ENCODE measurements at regions of chr1 and their contacts with region 1.

Region 1: GRCh38 chr1:153816283-153816889 is 41.2 kb downstream of the SLC27A3 start:
- DNase-seq: peak in 1 of 2 donors; percentile 26
- ATAC-seq: peak; percentile 57 to 80
- H3K4me3 ChIP-seq: no peak overlapping the region
- H3K27ac ChIP-seq: peak overlapping the region; percentile 19 to 74 (median 38)
- H3K4me1 ChIP-seq: peaks cover 0 to 25% of the 10 kb centered on the region in 2 donors
- H3K27me3 ChIP-seq: no peaks in the 10 kb centered on the region
- CTCF ChIP-seq: no peak
- POLR2A ChIP-seq: no peak

Region 2: DNA sequence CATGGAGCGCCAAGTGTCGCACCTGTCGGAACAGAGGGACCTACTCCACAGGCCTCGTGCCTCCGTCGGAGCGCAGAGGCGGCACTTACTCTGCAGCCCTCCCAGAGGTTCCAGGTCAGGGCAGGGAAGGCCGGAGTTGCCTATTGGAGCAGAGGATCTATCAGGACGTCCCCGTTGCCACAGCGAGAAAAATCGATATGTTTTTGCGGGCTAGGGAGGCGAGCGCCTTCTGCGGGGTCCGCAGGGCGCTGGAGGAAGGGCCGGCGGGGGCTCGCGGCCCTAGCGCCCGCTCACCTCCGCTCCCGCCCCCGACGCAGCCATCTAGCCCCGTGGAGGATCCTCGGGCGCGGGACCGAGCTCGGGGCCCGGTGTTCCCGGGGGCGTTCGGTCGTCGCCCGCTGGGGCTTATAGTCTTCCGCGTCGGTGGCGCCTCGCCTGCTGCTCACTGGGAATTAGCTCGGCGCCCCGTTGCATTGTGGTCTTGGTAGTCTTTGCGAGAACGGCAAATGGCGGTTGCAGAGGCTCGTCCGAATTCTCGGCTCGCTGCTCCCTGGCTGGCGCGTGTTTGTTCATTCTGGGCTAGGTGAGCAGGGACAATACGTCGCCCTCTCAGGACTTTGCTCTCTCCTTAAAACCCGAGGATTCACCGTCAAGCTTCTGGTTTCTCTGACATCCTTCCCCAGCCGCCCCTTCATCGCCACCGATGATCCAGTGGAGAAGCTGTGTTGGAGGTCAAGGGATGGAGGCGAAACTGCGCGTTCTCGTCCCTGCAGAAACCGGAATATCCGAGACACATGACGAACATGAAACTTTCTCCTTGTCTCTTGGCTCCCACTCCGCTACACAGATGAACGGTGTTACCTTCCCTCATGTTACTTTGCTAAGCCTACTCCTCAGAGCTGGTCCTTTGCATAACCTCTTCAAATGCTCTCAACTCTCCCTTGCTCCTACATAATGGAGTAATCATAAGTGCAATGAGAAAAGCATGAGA is 161.2 kb after region 1 on chr1 and contains the start of gene JTB:
- in situ Hi-C with region 1: loop called in 1 of 4 experiments (anchors 10 kb)
- intact Hi-C with region 1: no loop called
- DNase-seq: peak; percentile 86 to 87
- ATAC-seq: peak; percentile 95 to 97
- H3K4me3 ChIP-seq: peak within 1 kb of the TSS; percentile 71 to 100 (median 81)
- H3K27ac ChIP-seq: peak within 1 kb of the TSS; percentile 92 to 100 (median 92)
- H3K4me1 ChIP-seq: peaks cover 20 to 24% of the 10 kb centered on the region in 2 donors
- H3K27me3 ChIP-seq: no peaks in the 10 kb centered on the region
- CTCF ChIP-seq: no peak
- POLR2A ChIP-seq: peak; percentile 98
- total RNA-seq, gene JTB: 157 to 309 (median 259) TPM

Region 3: DNA sequence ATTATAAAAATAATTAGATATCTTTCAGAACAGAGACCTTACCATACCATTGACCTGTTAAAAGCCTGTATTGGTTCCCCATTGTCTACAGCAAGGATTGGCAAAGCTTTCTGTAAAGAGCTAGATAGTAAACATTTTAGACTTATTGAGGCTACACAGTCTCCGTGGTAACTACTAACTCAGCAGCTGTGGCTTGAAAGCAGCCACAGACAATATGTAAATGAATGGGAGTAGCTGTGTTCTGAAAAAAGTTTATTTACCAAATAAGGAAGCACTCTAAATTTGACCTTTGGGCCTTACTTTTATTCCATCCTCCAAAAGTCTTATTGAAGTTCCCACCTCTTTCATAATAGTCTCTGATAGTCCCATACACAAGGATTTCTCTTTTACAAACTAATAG is 298.8 kb after region 1 on chr1:
- in situ Hi-C with region 1: no loop called
- intact Hi-C with region 1: no loop called
- DNase-seq: no peak
- ATAC-seq: no peak
- H3K4me3 ChIP-seq: no peak overlapping the region
- H3K27ac ChIP-seq: no peak overlapping the region
- H3K4me1 ChIP-seq: no peaks in the 10 kb centered on the region
- H3K27me3 ChIP-seq: no peaks in the 10 kb centered on the region
- CTCF ChIP-seq: no peak
- POLR2A ChIP-seq: no peak